ENCODE measurements at regions of chr19 and their contacts with region 1.

Region 1: GRCh38 chr19:17496337-17496997 is 15.0 kb upstream of the PGLS start:
- DNase-seq: peak; percentile 92
- ATAC-seq: peak; percentile 100
- H3K4me3 Mint-ChIP-seq: no peak overlapping the region
- H3K27ac Mint-ChIP-seq: no peak overlapping the region
- H3K4me1 Mint-ChIP-seq: peaks cover 21% of the 10 kb centered on the region
- H3K27me3 Mint-ChIP-seq: no peaks in the 10 kb centered on the region
- CTCF ChIP-seq: peak; percentile 99

Region 2: GRCh38 chr19:17376935-17377600 is 119.4 kb before region 1 on chr19 and contains the start of gene PLVAP:
- CTCF ChIA-PET with region 1: no interaction called
- POLR2A ChIA-PET with region 1: no interaction called
- intact Hi-C with region 1: no loop called
- DNase-seq: no peak
- ATAC-seq: no peak
- H3K4me3 Mint-ChIP-seq: no peak within 1 kb of the TSS
- H3K27ac Mint-ChIP-seq: no peak within 1 kb of the TSS
- H3K4me1 Mint-ChIP-seq: no peaks in the 10 kb centered on the region
- H3K27me3 Mint-ChIP-seq: peaks cover 5% of the 10 kb centered on the region
- CTCF ChIP-seq: no peak
- total RNA-seq, gene PLVAP: not detected

Region 3: DNA sequence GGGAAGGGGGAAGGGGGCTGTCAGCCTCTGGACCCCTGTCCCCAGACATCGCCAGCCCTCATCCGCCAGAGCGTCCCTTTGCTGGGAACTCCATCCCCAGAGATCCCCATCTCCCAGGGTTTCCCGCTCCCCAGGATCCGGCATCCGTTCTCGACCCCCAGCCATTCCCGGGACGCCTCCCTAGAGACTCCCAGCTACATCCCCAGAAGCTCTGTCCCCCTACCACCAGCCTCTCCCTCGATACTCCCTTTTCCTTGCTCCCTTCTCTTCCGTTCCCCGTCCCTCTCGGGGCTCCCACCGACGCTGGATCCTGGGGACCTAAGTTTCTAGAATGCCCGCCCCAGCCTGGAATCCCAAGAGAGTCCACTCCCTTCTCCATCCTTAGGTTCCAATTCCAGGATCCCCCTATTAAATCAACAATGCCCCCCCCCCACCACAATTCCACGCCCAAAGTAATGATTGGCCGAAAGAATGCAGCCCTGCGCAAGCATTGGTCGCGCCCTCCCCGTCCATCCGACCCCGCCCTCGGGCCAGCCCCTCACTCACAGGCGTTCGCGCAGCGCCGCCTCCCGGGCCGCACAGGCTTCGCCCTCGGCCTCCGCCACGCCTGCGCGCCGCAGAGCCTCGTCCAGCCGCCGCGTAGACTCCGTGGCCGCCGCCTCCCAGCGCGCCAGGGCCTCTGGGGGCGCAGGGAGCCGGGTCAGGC is 105.6 kb before region 1 on chr19:
- CTCF ChIA-PET with region 1: interaction called, 10 read pairs
- POLR2A ChIA-PET with region 1: no interaction called
- intact Hi-C with region 1: no loop called
- DNase-seq: peak; percentile 95
- ATAC-seq: peak; percentile 99
- H3K4me3 Mint-ChIP-seq: peak overlapping the region; percentile 81
- H3K27ac Mint-ChIP-seq: no peak overlapping the region
- H3K4me1 Mint-ChIP-seq: peaks cover 17% of the 10 kb centered on the region
- H3K27me3 Mint-ChIP-seq: peaks cover 5% of the 10 kb centered on the region
- CTCF ChIP-seq: peak; percentile 78

Region 4: DNA sequence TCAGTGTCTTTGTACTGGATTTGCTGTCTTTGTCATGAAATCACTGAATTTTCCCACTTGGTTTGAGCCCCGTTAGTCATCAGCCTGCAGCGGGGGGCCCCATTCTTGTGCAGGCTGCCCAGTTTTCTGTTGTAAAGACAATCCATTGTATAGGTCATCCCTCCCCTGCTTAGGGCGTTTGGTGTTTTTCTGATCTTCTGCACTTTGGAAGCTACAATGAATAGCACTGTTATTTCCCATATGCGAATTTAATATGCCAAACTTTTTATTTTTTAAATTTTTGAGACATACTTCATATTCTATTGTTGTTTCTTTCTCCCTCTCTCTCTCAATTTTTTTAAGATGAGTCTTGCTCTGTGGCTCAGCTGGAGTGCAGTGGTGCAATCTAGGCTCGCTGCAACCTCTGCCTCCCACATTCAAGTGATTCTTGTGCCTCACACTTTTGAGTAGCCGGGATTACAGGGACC is 17.1 kb before region 1 on chr19:
- CTCF ChIA-PET with region 1: interaction called, 20 read pairs
- POLR2A ChIA-PET with region 1: no interaction called
- intact Hi-C with region 1: no loop called
- DNase-seq: no peak
- ATAC-seq: no peak
- H3K4me3 Mint-ChIP-seq: no peak overlapping the region
- H3K27ac Mint-ChIP-seq: no peak overlapping the region
- H3K4me1 Mint-ChIP-seq: peaks cover 3% of the 10 kb centered on the region
- H3K27me3 Mint-ChIP-seq: no peaks in the 10 kb centered on the region
- CTCF ChIP-seq: no peak

Region 5: DNA sequence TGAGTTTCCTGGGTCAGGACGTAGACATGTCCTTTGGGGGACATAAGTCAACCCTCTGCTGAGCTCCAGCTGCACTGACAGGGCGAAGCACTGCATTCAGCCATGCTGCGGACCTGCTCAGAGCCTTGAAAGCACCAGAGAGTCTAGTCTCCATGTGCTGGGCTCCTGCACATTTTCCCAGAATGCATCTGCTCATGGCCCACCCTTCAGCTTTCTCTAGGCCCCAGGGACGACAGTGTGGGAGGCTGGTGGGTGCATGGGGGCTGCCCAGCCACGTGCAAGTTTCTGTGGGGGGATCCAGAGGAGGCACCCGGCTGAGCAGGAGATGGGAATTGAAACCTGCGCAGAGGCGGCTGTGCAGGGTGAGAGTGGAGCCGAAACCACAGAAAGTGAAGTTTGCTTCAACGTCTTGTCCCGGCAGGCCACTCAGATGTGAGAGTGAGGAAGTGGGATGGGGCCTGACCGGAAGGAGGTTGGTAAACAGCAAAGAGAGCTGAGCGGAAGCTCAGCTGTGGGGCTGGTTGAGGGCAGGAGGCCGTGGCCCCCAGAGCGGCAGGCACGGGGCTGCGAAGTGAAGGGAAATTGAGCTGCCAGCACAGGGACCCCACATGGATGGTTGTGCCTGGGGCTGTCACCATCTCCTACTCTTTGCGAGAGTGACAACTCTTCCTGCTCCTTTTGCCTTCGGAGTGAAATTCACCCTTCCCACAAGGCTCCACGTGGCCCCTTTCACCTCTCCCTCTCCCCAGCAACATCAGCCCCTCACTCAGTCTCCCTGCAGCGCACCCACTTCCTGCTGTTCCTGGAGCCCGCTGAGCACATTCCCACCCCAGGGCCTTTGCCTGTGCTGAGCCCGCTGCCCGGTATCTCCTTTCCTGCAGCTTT is 26.8 kb after region 1 on chr19:
- CTCF ChIA-PET with region 1: interaction called, 31 read pairs
- POLR2A ChIA-PET with region 1: no interaction called
- intact Hi-C with region 1: no loop called
- DNase-seq: peak; percentile 89
- ATAC-seq: peak; percentile 84
- H3K4me3 Mint-ChIP-seq: peak overlapping the region; percentile 49
- H3K27ac Mint-ChIP-seq: peak overlapping the region; percentile 93
- H3K4me1 Mint-ChIP-seq: peaks cover 38% of the 10 kb centered on the region
- H3K27me3 Mint-ChIP-seq: no peaks in the 10 kb centered on the region
- CTCF ChIP-seq: no peak

Region 6: DNA sequence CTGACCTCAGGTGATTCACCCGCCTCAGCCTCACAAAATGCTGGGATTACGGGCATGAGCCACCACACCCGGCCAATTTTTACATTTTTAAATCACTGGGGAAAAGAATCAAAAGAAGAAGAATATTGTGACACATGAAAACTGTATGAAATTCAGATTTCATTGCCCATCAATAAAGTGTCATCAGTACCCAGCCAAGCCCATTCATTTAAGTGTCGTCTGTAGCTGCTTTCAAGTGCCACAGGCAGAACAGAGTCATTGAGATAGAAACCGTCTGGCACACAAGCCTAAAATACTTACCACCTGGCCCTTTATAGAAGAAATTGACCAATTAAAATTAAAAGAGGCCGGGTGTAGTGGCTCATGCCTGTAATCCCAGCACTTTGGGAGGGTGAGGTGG is 74.3 kb after region 1 on chr19:
- CTCF ChIA-PET with region 1: interaction called, 21 read pairs
- POLR2A ChIA-PET with region 1: no interaction called
- intact Hi-C with region 1: no loop called
- DNase-seq: no peak
- ATAC-seq: no peak
- H3K4me3 Mint-ChIP-seq: no peak overlapping the region
- H3K27ac Mint-ChIP-seq: no peak overlapping the region
- H3K4me1 Mint-ChIP-seq: peaks cover 2% of the 10 kb centered on the region
- H3K27me3 Mint-ChIP-seq: no peaks in the 10 kb centered on the region
- CTCF ChIP-seq: no peak

Region 7: DNA sequence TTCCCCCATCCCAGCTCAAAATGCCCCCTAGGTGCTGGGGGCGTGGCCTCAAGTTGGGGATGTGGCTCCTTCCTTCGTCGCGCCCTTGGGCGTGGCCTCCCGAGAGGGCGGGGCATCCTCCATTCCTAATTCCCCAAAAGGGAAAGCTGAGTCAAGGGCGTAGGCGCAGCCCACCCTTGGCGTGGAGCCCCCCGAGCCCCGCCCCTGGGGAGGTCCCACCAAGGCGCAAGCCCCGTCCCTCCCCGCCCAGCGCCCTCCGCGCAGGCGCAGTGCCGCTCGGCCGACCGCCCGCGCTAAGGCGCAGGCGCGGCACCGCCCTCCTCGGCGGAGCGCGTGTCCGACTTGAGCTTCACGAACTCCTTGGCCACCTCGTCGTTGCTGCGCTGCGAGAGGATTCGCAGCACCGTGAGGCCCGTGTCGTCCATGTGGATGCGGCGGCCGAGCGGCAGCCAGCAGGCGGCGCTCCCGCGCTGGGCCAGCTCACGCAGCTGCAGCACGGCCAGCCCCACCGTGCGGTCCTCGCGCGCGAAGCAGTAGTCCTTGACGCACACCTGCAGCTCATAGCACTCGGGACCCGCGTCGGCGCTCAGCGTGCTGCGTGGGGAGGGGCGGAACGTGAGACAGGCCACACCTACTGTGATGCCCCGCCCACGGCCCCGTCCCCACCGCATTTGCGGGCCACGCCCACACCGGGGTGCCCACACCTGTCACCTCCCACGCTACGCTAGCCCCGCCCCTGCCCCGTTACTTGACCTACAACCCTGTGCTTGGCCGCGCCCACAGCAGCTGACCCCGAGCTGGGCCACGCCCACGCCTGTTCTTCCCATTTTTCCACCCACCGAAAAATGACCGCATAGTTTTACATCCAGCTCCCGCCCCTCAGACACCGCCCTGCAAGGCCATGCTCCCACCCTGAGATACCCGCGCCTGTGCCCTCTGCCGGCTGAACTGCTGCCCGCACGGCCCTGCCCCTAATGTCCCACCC is 109.6 kb after region 1 on chr19:
- CTCF ChIA-PET with region 1: interaction called, 15 read pairs
- POLR2A ChIA-PET with region 1: no interaction called
- intact Hi-C with region 1: no loop called
- DNase-seq: peak; percentile 89
- ATAC-seq: peak; percentile 89
- H3K4me3 Mint-ChIP-seq: peak overlapping the region; percentile 72
- H3K27ac Mint-ChIP-seq: no peak overlapping the region
- H3K4me1 Mint-ChIP-seq: peaks cover 7% of the 10 kb centered on the region
- H3K27me3 Mint-ChIP-seq: peaks cover 26% of the 10 kb centered on the region
- CTCF ChIP-seq: peak; percentile 75

Measured in activated CD8-positive, alpha-beta T cell treated with anti-CD3 and anti-CD28 coated beads for 36 hours (primary cell).